PC-9 (cell line): ENCODE measurements at regions of chr20 and their contacts with region 1.

Region 1: GRCh38 chr20:53427951-53428350 is 165.7 kb downstream of the ZNF217 start:
- DNase-seq: no peak
- H3K4me3 ChIP-seq: no peak overlapping the region
- H3K27ac ChIP-seq: no peak overlapping the region
- H3K4me1 ChIP-seq: no peaks in the 10 kb centered on the region
- H3K27me3 ChIP-seq: peaks cover 83% of the 10 kb centered on the region
- CTCF ChIP-seq: no peak

Region 2: GRCh38 chr20:53413186-53413631 is 14.7 kb before region 1 on chr20:
- CTCF ChIA-PET with region 1: no interaction called
- POLR2A ChIA-PET with region 1: interaction called, 12 read pairs
- intact Hi-C with region 1: no loop called
- DNase-seq: peak; percentile 52 to 63
- H3K4me3 ChIP-seq: no peak overlapping the region
- H3K27ac ChIP-seq: no peak overlapping the region
- H3K4me1 ChIP-seq: no peaks in the 10 kb centered on the region
- H3K27me3 ChIP-seq: peaks cover 45% of the 10 kb centered on the region
- CTCF ChIP-seq: peak; percentile 52